ENCODE measurements at regions of chr20 and their contacts with region 1.

Region 1: DNA sequence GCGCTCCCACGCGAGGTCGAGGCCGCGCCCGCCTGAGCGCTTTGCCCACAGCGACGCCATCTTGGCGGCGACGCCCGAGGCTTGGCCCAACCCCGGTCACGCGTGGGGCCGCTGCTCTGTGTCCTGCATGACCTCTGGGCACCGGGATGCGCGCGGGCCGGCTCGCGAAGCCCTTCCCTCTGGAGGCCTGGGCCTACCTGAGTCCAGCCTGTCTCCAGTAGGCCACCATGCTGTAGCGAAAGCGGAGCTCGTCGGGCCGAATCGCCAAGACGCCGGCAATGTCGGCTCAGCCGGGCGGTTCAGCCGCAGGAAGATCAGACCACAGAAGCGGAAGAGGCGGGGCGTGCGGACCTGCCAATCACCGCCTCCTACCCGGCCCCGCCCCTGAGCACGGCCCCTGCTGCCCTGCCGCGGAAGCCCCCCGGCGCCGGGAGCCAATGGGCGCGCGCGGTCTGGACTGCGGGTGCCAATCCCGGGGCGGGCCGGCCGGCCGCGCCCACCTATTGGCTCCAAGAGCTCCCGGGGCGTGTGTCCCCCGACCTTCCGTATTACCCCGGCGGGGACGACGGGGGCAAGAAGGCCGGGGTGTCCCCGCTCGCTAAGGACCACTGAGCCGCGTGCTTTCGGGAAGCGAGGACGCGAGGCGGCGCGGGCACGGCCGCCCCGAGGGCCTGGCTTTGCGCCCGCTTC is at the start of gene ATP5F1E:
- DNase-seq: peak; percentile 50 to 94
- H3K4me3 ChIP-seq: peak within 1 kb of the TSS; percentile 84 to 93 (median 89)
- H3K27ac ChIP-seq: peak within 1 kb of the TSS; percentile 70
- H3K4me1 ChIP-seq: peaks cover 0 to 6% (median 1%) of the 10 kb centered on the region in 4 experiments; a peak in 3 of 7 replicates
- H3K27me3 ChIP-seq: peaks cover 0 to 9% (median 3%) of the 10 kb centered on the region in 4 experiments; a peak in 2 of 7 replicates
- CTCF ChIP-seq: no peak
- EP300 ChIP-seq: no peak
- POLR2A ChIP-seq: peak; percentile 79 to 89
- RAD21 ChIP-seq: no peak
- total RNA-seq, gene ATP5F1E: 45.5 and 47.8 TPM in 2 replicates

Region 2: GRCh38 chr20:59020938-59021551 is 11.1 kb before region 1 on chr20:
- CTCF ChIA-PET with region 1: interaction called, 5 read pairs
- POLR2A ChIA-PET with region 1: interaction called, 28 read pairs
- DNase-seq: no peak
- H3K4me3 ChIP-seq: no peak overlapping the region
- H3K27ac ChIP-seq: no peak overlapping the region
- H3K4me1 ChIP-seq: peaks cover 0 to 2% (median 0%) of the 10 kb centered on the region in 4 experiments; a peak in 3 of 7 replicates
- H3K27me3 ChIP-seq: no peaks in the 10 kb centered on the region; a peak in 1 of 7 replicates
- CTCF ChIP-seq: no peak
- EP300 ChIP-seq: no peak
- POLR2A ChIP-seq: no peak
- RAD21 ChIP-seq: no peak

Region 3: GRCh38 chr20:59074445-59074844 is 42.3 kb after region 1 on chr20:
- CTCF ChIA-PET with region 1: no interaction called
- POLR2A ChIA-PET with region 1: no interaction called
- DNase-seq: no peak
- H3K4me3 ChIP-seq: no peak overlapping the region
- H3K27ac ChIP-seq: no peak overlapping the region
- H3K4me1 ChIP-seq: no peaks in the 10 kb centered on the region
- H3K27me3 ChIP-seq: no peaks in the 10 kb centered on the region; a peak in 2 of 7 replicates
- CTCF ChIP-seq: no peak
- EP300 ChIP-seq: no peak
- POLR2A ChIP-seq: no peak
- RAD21 ChIP-seq: no peak